Tibial artery (tissue), 4 donors: ENCODE measurements at regions of chr19 and their contacts with region 1.

Region 1: DNA sequence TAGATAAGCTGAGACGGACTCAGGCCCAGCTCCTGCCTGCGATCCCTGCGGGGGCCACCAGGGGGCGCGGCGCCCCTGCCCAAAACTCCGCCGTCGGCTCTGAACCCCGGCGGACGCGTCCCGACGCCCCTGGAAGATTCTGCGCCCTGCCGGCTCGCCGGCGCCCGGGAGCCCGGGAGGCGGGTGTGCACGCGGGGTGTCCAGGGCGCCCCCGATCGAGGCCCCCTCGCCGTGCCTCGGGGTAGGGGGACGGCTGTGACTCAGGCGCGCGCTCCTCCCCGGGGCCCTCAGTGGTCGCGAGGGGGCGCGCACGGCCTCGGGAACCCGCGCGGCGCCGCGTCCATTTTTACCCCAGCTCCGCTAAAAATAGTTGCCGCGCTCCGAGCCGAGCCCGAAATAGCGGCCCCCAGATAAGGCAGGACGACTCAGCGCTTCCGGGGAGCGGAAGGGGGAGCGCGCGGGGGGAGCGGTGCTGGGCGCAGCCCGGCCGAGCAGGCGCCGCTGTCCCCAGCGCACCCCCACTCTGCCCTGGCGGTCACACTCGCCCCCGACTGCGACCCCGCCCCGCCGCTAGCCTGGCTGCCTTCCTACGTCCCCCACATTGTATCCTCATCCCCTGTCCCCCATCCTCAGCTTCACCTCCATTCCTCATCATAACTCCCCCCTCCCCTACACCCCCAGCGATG is 16.0 kb upstream of the ERCC1 start:
- DNase-seq: peak; percentile 87 to 95
- H3K4me3 ChIP-seq: peak overlapping the region; percentile 60 to 80
- H3K27ac ChIP-seq: peak overlapping the region; percentile 92
- H3K4me1 ChIP-seq: peaks cover 5 to 32% (median 24%) of the 10 kb centered on the region in 4 donors
- H3K27me3 ChIP-seq: no peaks in the 10 kb centered on the region
- CTCF ChIP-seq: peak; percentile 99

Region 2: GRCh38 chr19:45478454-45479238 is 38.9 kb after region 1 on chr19:
- intact Hi-C with region 1: loop called (anchors 2 kb)
- DNase-seq: peak; percentile 77 to 89
- H3K4me3 ChIP-seq: peak overlapping the region; percentile 51 to 55
- H3K27ac ChIP-seq: peak overlapping the region; percentile 94 to 98
- H3K4me1 ChIP-seq: peaks cover 0 to 12% (median 8%) of the 10 kb centered on the region in 4 donors
- H3K27me3 ChIP-seq: no peaks in the 10 kb centered on the region
- CTCF ChIP-seq: peak; percentile 95 to 98

Region 3: DNA sequence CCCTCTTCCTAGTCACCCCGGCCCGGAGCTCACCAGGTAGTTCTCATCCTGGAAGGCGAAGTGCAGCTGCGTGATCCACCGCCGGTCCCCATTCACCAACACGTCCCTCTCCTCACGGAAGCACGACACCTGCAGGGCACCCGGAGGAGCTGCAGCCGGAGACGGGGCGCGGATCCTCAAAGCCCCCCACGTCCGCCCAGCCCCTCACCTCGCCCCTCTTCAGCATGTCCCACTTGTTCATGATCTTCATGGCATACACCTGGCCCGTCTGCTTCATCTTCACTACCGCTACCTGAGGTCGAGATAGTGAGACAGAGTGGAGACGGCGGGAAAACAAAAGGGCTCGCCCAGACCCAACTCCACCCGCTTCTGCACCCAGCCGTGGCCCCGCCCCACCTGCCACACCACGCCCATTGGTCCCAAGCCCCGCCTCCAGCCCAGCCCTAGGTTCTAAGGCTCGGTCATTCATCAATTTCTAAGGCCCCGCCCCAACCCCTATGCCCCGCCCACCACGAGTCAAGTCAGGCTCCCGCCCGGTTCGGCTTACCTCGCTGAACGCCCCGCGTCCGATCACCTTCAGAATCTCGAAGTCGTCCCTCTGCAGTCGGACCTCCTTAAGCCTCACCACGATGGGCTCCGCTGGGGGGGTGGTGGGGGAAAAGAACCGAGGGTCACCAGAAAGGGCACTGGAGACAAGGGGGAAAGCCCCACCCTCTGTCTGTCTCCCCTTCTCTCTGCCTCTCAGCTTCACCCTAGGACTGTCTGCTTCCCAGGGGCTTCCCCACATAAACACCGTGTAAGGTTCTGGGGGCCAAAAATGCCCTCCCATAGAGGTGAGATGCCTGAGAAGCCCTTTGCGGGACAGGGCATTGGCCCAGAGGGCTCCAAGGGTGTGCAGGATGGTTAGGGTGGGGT is 339.8 kb after region 1 on chr19:
- intact Hi-C with region 1: no loop called
- DNase-seq: peak; percentile 86 to 95
- H3K4me3 ChIP-seq: peak overlapping the region; percentile 76 to 86
- H3K27ac ChIP-seq: peak overlapping the region; percentile 92 to 94
- H3K4me1 ChIP-seq: peaks cover 8 to 66% (median 38%) of the 10 kb centered on the region in 4 donors
- H3K27me3 ChIP-seq: no peaks in the 10 kb centered on the region
- CTCF ChIP-seq: peak; percentile 54